CD4-positive, alpha-beta T cell (primary cell): ENCODE measurements at regions of chr1 and their contacts with region 1.

Region 1: DNA sequence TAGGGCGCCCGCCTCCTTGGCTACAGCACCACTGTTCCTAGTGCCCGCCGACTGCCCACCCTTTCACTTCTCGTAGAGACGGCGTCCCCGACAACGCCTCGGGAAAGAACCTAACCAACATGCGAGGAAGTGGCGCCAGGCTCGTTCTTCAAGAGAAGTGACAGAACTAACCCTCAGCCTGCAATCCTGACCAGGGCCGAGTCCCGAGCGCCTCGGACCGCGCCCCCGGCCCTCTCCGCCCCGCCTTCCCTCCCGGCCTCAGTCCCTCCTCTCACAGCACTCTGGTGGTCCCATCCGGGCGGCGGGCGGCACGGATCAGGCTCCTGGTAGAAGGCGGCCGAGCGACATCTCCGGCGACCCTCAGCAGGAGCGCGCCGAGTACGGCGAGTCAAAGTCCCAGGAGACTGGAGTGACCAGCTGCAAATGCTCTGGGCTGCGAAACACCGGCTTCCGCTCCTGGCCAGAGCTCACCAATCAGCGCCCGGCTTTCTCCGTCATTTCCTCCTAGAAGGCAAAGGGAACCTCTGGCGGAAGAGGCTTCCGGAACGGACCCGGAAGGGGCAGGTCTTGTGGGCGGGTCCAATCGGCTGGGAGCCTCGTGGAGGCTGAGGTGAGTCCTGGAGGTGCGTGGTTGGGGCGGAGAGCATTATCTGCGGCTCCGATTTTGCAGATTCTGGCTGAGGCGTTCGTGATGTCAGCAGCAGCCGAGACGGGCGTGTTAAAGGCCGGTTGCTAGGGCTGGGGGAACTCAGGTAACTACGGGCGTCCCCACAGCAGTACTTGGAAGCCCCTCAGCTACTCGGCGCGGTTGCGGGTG is at the starts of genes GDAP2 and WDR3:
- DNase-seq: peak; percentile 87 to 98 (median 94)
- ATAC-seq: peak; percentile 94
- H3K4me3 ChIP-seq: peak within 1 kb of the TSS; percentile 89
- H3K4me3 Mint-ChIP-seq: peak within 1 kb of the TSS; percentile 96
- H3K27ac ChIP-seq: peak within 1 kb of the TSS; percentile 83 to 90
- H3K27ac Mint-ChIP-seq: peak within 1 kb of the TSS; percentile 92
- H3K4me1 ChIP-seq: peaks cover 21% of the 10 kb centered on the region
- H3K4me1 Mint-ChIP-seq: peaks cover 76% of the 10 kb centered on the region
- H3K27me3 ChIP-seq: no peaks in the 10 kb centered on the region
- H3K27me3 Mint-ChIP-seq: no peaks in the 10 kb centered on the region
- CTCF ChIP-seq: no peak
- total RNA-seq, gene GDAP2: 18.1 to 18.9 TPM
- total RNA-seq, gene WDR3: 5.8 to 7.5 TPM

Region 2: GRCh38 chr1:116724765-116725375 is 1204.5 kb before region 1 on chr1:
- CTCF ChIA-PET with region 1: no interaction called
- POLR2A ChIA-PET with region 1: no interaction called
- intact Hi-C with region 1: no loop called
- DNase-seq: peak; percentile 56 to 90 (median 72)
- ATAC-seq: no peak
- H3K4me3 ChIP-seq: no peak overlapping the region
- H3K4me3 Mint-ChIP-seq: no peak overlapping the region
- H3K27ac ChIP-seq: no peak overlapping the region
- H3K27ac Mint-ChIP-seq: no peak overlapping the region
- H3K4me1 ChIP-seq: peaks cover 3% of the 10 kb centered on the region
- H3K4me1 Mint-ChIP-seq: peaks cover 22% of the 10 kb centered on the region
- H3K27me3 ChIP-seq: no peaks in the 10 kb centered on the region
- H3K27me3 Mint-ChIP-seq: no peaks in the 10 kb centered on the region
- CTCF ChIP-seq: peak; percentile 97

Region 3: GRCh38 chr1:117902944-117903343 is 26.4 kb before region 1 on chr1:
- CTCF ChIA-PET with region 1: no interaction called
- POLR2A ChIA-PET with region 1: no interaction called
- intact Hi-C with region 1: no loop called
- DNase-seq: no peak
- ATAC-seq: no peak
- H3K4me3 ChIP-seq: no peak overlapping the region
- H3K4me3 Mint-ChIP-seq: no peak overlapping the region
- H3K27ac ChIP-seq: no peak overlapping the region
- H3K27ac Mint-ChIP-seq: peak overlapping the region; percentile 18
- H3K4me1 ChIP-seq: no peaks in the 10 kb centered on the region
- H3K4me1 Mint-ChIP-seq: no peaks in the 10 kb centered on the region
- H3K27me3 ChIP-seq: no peaks in the 10 kb centered on the region
- H3K27me3 Mint-ChIP-seq: no peaks in the 10 kb centered on the region
- CTCF ChIP-seq: no peak

Region 4: DNA sequence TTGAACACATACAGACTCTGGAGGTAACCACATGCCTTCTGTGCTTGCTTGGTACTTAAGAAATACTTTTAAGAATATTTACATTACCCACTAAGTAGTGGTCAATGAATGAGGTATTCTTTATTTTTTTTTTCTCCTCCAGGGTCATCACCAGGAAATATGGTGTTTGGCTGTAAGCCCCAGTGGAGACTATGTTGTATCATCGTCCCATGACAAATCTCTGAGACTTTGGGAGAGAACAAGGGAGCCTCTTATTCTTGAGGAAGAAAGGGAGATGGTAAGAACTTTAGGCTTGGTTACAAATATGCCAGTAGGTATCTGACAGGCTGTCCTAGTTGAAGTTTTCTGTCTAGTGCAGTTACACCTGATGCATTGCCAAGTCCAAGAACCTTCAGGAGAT is 23.0 kb after region 1 on chr1:
- CTCF ChIA-PET with region 1: no interaction called
- POLR2A ChIA-PET with region 1: no interaction called
- intact Hi-C with region 1: no loop called
- DNase-seq: no peak
- ATAC-seq: no peak
- H3K4me3 ChIP-seq: no peak overlapping the region
- H3K4me3 Mint-ChIP-seq: no peak overlapping the region
- H3K27ac ChIP-seq: no peak overlapping the region
- H3K27ac Mint-ChIP-seq: no peak overlapping the region
- H3K4me1 ChIP-seq: no peaks in the 10 kb centered on the region
- H3K4me1 Mint-ChIP-seq: no peaks in the 10 kb centered on the region
- H3K27me3 ChIP-seq: no peaks in the 10 kb centered on the region
- H3K27me3 Mint-ChIP-seq: no peaks in the 10 kb centered on the region
- CTCF ChIP-seq: no peak

Region 5: GRCh38 chr1:119140177-119141019 is 1211.0 kb after region 1 on chr1 and contains the start of gene WARS2:
- CTCF ChIA-PET with region 1: no interaction called
- POLR2A ChIA-PET with region 1: no interaction called
- intact Hi-C with region 1: loop called in 1 of 2 experiments (anchors 5 kb)
- DNase-seq: peak; percentile 85 to 99 (median 89)
- ATAC-seq: peak; percentile 91
- H3K4me3 ChIP-seq: peak within 1 kb of the TSS; percentile 76
- H3K4me3 Mint-ChIP-seq: no peak within 1 kb of the TSS
- H3K27ac ChIP-seq: peak within 1 kb of the TSS; percentile 97 to 100
- H3K27ac Mint-ChIP-seq: no peak within 1 kb of the TSS
- H3K4me1 ChIP-seq: peaks cover 19% of the 10 kb centered on the region
- H3K4me1 Mint-ChIP-seq: peaks cover 18% of the 10 kb centered on the region
- H3K27me3 ChIP-seq: no peaks in the 10 kb centered on the region
- H3K27me3 Mint-ChIP-seq: no peaks in the 10 kb centered on the region
- CTCF ChIP-seq: no peak
- total RNA-seq, gene WARS2: 15.8 to 16.5 TPM